Pancreas (tissue), 10 donors: ENCODE measurements at regions of chr1 and their contacts with region 1.

Region 1: GRCh38 chr1:2632561-2633361 is at the start of gene MMEL1:
- DNase-seq: peak in 1 of 6 donors; percentile 48
- ATAC-seq: no peak
- H3K4me3 ChIP-seq: no peak within 1 kb of the TSS
- H3K27ac ChIP-seq: no peak within 1 kb of the TSS
- H3K4me1 ChIP-seq: no peaks in the 10 kb centered on the region
- H3K27me3 ChIP-seq: peaks cover 0 to 17% (median 0%) of the 10 kb centered on the region in 4 donors
- CTCF ChIP-seq: no peak
- total RNA-seq, gene MMEL1: 0.39 to 3.1 (median 2.2) TPM

Region 2: DNA sequence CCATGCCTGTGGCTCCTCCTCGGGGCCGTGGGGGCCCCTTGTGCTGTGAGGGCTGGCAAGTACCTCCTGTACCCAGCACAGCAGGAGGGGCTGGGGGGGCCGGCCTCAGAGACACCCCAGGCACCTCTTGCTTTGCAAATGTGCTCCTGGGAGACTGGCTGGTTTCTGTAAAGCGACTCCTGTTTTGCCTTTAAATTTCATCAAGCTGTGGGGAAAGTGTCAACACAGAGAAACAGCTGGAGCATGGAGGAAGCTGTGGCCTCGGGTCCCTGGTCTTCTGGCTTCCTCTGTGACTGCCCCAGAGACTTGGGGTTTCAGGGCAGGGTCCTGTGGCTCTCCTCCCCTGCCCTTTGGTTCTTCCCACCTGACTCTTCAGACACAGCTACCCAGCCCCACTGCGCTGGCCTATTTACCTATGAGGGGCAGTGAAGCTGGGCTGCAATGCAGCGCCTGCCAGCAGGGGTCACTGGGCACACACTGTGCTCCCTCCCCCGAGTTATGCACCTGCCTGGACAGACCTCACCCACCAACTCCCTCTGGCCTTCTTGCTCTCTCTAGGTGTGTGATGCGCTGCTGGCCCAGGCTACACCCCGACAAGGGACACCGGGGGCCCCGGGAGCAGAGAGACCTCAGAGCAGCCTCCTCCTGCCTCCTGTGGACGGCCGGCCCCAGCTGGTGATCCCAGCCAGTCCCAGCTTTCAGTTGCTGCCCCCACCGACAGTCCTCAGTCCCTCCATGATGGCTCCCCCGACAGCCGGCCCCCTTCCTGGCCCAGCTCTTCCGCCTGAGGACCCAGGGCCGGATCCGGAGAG is 202.8 kb before region 1 on chr1:
- intact Hi-C with region 1: loop called in 1 of 3 experiments (anchors 10 kb)
- DNase-seq: no peak
- ATAC-seq: no peak
- H3K4me3 ChIP-seq: no peak overlapping the region
- H3K27ac ChIP-seq: no peak overlapping the region
- H3K4me1 ChIP-seq: no peaks in the 10 kb centered on the region
- H3K27me3 ChIP-seq: no peaks in the 10 kb centered on the region
- CTCF ChIP-seq: no peak

Region 3: DNA sequence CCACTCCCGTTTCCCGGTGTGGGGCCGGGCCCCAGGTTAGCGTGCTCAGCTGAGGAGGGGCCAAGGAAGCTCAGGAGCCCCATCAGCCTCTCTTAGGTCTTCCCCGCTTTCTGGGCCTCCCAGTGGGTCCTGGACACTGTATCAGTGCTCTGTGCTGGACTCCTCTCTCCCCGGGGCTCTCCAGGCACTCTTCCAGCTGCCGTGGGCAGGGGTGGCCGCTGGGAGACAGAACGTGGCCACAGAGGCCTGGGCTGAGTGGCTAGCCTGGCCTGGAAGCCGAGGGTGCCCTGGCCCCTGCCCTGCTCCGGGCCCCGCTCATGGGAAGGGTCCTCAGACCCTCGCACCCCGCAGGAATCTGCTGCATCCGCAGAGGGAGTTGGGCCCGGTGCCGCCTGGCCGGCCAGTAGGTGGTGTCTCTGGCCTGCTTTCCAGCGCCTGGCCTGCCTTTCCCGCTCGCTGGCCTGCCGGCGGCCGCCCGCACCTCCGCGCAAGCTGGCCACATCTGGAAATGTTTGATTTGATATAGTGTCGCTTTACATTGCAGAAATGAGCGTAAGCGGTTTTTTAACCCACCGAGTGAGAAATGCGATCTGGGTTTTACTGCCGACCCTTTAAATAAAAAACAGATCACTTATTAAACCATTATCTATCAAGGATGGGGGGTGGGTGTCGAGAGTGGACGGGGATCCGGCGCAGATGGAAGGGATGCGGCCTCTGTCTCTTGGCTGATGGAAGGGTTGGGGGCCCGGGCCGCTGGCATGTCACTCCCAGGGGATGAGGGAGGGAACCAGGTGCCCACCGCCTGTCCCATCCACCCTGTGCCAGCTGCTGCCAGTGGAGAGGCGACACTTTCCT is 243.2 kb after region 1 on chr1:
- intact Hi-C with region 1: no loop called
- DNase-seq: peak in 4 of 6 donors; percentile 8 to 74 (median 41)
- ATAC-seq: peak; percentile 55 to 85 (median 74)
- H3K4me3 ChIP-seq: no peak overlapping the region
- H3K27ac ChIP-seq: no peak overlapping the region
- H3K4me1 ChIP-seq: no peaks in the 10 kb centered on the region
- H3K27me3 ChIP-seq: no peaks in the 10 kb centered on the region
- CTCF ChIP-seq: peak in 3 of 4 donors; percentile 15 to 42 (median 22)

Region 4: GRCh38 chr1:3515774-3516480 is 883.2 kb after region 1 on chr1:
- intact Hi-C with region 1: no loop called
- DNase-seq: no peak
- ATAC-seq: no peak
- H3K4me3 ChIP-seq: no peak overlapping the region
- H3K27ac ChIP-seq: no peak overlapping the region
- H3K4me1 ChIP-seq: no peaks in the 10 kb centered on the region
- H3K27me3 ChIP-seq: no peaks in the 10 kb centered on the region
- CTCF ChIP-seq: no peak

Region 5: DNA sequence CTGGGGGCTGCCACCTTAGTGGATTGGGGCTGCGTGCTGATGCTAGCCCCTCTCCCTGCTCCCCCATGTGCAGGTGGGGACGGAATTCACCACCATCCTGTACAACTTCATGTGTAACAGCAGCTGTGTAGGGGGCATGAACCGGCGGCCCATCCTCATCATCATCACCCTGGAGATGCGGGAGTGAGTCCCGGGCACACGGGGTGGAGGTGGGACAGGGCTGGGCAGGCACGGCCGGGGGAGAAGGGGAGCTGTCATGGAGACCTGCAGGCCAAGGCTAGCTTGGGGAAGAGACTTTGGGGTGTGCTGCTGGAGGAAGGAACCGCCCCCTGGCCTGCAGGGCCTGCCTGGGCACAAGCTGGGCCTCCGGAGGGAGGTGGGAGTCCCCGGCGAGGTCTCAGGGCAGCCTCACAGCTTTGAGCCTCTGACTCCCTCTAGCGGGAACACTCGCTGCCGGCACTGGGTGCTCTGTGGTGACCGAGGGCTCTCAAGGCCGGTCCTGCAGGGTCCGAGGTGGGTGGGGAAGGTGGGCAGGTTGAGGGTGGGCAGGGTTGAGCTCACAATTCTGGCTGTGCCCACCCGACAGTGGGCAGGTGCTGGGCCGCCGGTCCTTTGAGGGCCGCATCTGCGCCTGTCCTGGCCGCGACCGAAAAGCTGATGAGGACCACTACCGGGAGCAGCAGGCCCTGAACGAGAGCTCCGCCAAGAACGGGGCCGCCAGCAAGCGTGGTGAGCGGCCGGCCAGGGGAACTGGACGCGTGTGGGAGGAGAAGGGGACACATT is 1094.5 kb after region 1 on chr1:
- intact Hi-C with region 1: no loop called
- DNase-seq: peak in 1 of 6 donors; percentile 65
- ATAC-seq: peak in 2 of 4 donors; percentile 24 to 60
- H3K4me3 ChIP-seq: no peak overlapping the region
- H3K27ac ChIP-seq: no peak overlapping the region
- H3K4me1 ChIP-seq: no peaks in the 10 kb centered on the region
- H3K27me3 ChIP-seq: no peaks in the 10 kb centered on the region
- CTCF ChIP-seq: no peak